SK-N-SH (cell line): ENCODE measurements at regions of chr18 and their contacts with region 1.

Region 1: GRCh38 chr18:5295981-5296705 is 617 bp upstream of the ZBTB14 start:
- DNase-seq: peak; percentile 94
- H3K4me3 ChIP-seq: peak overlapping the region; percentile 78 to 83
- H3K27ac ChIP-seq: peak overlapping the region; percentile 86 to 96
- H3K4me1 ChIP-seq: peaks cover 0 to 7% of the 10 kb centered on the region in 2 experiments; a peak in 1 of 4 replicates
- H3K27me3 ChIP-seq: peaks cover 4% of the 10 kb centered on the region; the same call in 1 of the 2 replicates
- CTCF ChIP-seq: no peak
- EP300 ChIP-seq: no peak
- RAD21 ChIP-seq: no peak

Region 2: GRCh38 chr18:5197461-5197860 is 98.7 kb before region 1 on chr18:
- CTCF ChIA-PET with region 1: no interaction called
- POLR2A ChIA-PET with region 1: no interaction called
- DNase-seq: peak; percentile 14
- H3K4me3 ChIP-seq: no peak overlapping the region
- H3K27ac ChIP-seq: no peak overlapping the region
- H3K4me1 ChIP-seq: no peaks in the 10 kb centered on the region; a peak in 1 of 4 replicates
- H3K27me3 ChIP-seq: peaks cover 16% of the 10 kb centered on the region
- CTCF ChIP-seq: no peak
- EP300 ChIP-seq: no peak
- RAD21 ChIP-seq: no peak

Region 3: GRCh38 chr18:5237723-5238370 is 58.3 kb before region 1 on chr18:
- CTCF ChIA-PET with region 1: interaction called, 3 read pairs
- POLR2A ChIA-PET with region 1: interaction called, 30 read pairs
- DNase-seq: peak; percentile 90
- H3K4me3 ChIP-seq: peak overlapping the region; percentile 81 to 90
- H3K27ac ChIP-seq: peak overlapping the region; percentile 94 to 95
- H3K4me1 ChIP-seq: peaks cover 0 to 10% of the 10 kb centered on the region in 2 experiments; a peak in 2 of 4 replicates
- H3K27me3 ChIP-seq: no peaks in the 10 kb centered on the region
- CTCF ChIP-seq: no peak; the same call in 1 of the 2 replicates
- EP300 ChIP-seq: no peak
- RAD21 ChIP-seq: no peak

Region 4: GRCh38 chr18:5285326-5285725 is 10.8 kb before region 1 on chr18:
- CTCF ChIA-PET with region 1: no interaction called
- POLR2A ChIA-PET with region 1: interaction called, 11 read pairs
- DNase-seq: peak; percentile 43
- H3K4me3 ChIP-seq: no peak overlapping the region
- H3K27ac ChIP-seq: no peak overlapping the region
- H3K4me1 ChIP-seq: peaks cover 0 to 7% of the 10 kb centered on the region in 2 experiments; a peak in 2 of 4 replicates
- H3K27me3 ChIP-seq: no peaks in the 10 kb centered on the region
- CTCF ChIP-seq: no peak
- EP300 ChIP-seq: no peak
- RAD21 ChIP-seq: no peak